Esophagus muscularis mucosa (tissue), 4 donors: ENCODE measurements at regions of chr4 and their contacts with region 1.

Region 1: DNA sequence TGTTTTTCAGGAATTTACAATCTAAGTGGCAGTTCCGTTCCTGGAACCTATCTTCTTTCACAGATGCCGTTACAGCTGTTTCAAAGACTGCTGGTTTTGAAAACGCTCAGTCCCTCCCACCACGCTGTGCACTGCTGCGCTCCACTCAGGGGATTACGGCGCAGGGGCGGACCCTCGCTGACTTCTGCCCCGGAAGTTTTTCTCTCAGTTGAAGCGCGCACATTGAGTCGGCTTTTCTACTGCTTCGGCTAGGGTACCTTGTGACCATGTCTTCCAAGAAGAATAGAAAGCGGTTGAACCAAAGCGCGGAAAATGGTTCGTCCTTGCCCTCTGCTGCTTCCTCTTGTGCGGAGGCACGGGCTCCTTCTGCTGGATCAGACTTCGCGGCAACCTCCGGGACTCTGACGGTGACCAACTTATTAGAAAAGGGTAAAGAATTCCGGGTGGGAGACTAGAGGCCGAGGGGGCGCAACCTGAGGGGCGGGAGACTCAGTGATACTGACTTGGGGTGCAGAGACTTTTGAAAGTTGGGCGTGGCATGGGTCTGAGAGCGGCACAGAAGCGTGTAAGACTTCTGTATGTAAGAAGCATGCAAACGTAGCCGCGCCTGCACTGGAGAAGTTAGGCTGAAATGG is 597 bp upstream of the NUDT6 start:
- DNase-seq: peak; percentile 96
- H3K4me3 ChIP-seq: peak overlapping the region; percentile 80 to 95 (median 88)
- H3K27ac ChIP-seq: peak overlapping the region; percentile 73 to 85 (median 84)
- H3K4me1 ChIP-seq: peaks cover 15 to 42% (median 24%) of the 10 kb centered on the region in 4 donors
- H3K27me3 ChIP-seq: no peaks in the 10 kb centered on the region
- CTCF ChIP-seq: no peak
- EP300 ChIP-seq: no peak
- POLR2A ChIP-seq: no peak

Region 2: GRCh38 chr4:122602277-122603142 is 320.5 kb before region 1 on chr4:
- intact Hi-C with region 1: loop called (anchors 10 kb)
- DNase-seq: no peak
- H3K4me3 ChIP-seq: no peak overlapping the region
- H3K27ac ChIP-seq: no peak overlapping the region
- H3K4me1 ChIP-seq: peaks cover 0 to 4% (median 0%) of the 10 kb centered on the region in 4 donors
- H3K27me3 ChIP-seq: peaks cover 0 to 10% (median 0%) of the 10 kb centered on the region in 4 donors
- CTCF ChIP-seq: peak; percentile 27 to 49 (median 48)
- EP300 ChIP-seq: no peak
- POLR2A ChIP-seq: no peak

Region 3: DNA sequence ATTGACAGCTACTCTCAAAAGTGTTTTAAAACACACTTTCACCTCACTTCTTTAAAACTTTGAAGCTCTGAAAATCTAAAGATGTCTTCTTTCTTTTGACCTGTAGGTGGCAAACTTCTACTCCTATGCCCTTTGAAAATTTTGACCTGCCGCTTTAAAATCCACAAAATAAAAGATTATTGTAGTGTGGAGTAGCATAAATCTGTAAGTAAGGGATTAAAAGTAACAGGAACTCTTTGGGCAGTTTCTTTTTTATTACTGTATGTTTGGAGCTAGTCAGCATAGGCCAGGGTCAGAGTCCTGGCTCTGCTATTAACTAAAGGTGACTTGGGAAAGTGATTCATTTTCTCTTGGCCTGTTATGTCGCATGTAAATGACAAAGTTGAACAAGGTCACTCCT is 165.0 kb before region 1 on chr4:
- intact Hi-C with region 1: loop called (anchors 2 kb)
- DNase-seq: no peak
- H3K4me3 ChIP-seq: no peak overlapping the region
- H3K27ac ChIP-seq: no peak overlapping the region
- H3K4me1 ChIP-seq: peaks cover 4 to 7% (median 4%) of the 10 kb centered on the region in 4 donors
- H3K27me3 ChIP-seq: no peaks in the 10 kb centered on the region
- CTCF ChIP-seq: peak; percentile 63 to 77 (median 73)
- EP300 ChIP-seq: no peak
- POLR2A ChIP-seq: no peak

Region 4: DNA sequence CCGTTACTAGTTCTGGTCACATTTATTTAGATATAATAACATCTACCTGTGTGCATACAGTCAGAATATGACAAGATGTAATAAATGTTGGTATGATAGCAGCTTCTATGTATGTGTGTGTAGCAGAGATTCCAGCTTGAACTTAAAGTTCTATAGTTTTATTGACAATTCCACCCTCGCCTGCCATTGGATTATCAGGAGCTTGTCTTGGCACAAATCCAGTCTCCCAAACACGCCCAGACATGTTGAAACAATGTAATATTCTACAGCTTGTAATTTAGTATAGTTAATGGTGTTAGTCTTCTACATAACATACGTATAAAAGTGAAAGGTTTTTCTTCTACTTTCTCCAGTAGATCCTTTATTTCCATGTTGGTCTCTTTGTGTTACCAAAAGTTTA is 146.1 kb before region 1 on chr4:
- intact Hi-C with region 1: no loop called
- DNase-seq: no peak
- H3K4me3 ChIP-seq: no peak overlapping the region
- H3K27ac ChIP-seq: no peak overlapping the region
- H3K4me1 ChIP-seq: peaks cover 0 to 7% (median 7%) of the 10 kb centered on the region in 4 donors
- H3K27me3 ChIP-seq: no peaks in the 10 kb centered on the region
- CTCF ChIP-seq: no peak
- EP300 ChIP-seq: no peak
- POLR2A ChIP-seq: no peak

Region 5: DNA sequence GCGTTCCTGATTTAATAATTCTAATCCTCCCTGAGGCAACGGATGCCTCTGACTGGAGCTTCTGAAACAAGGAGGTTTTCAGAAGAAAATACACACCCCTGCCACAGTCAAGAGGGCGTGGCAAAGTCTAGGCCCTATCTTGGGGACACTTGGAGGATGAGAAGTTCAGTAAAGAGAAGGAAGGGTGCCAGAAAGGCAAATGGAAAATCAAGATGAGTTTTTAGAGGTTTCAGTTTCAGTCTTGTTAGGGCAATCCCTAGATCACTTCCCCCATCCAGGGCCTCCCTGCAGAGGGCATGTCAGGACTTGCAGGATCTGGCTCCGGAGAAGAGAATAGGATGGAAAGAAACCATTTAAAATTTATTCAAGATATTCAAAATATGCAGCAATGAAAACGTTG is 124.9 kb before region 1 on chr4:
- intact Hi-C with region 1: no loop called
- DNase-seq: no peak
- H3K4me3 ChIP-seq: peak overlapping the region; percentile 23 to 45 (median 28)
- H3K27ac ChIP-seq: peak overlapping the region; percentile 60 to 72 (median 64)
- H3K4me1 ChIP-seq: peaks cover 10 to 19% (median 14%) of the 10 kb centered on the region in 4 donors
- H3K27me3 ChIP-seq: no peaks in the 10 kb centered on the region
- CTCF ChIP-seq: peak in 2 of 3 experiments; percentile 22 to 27
- EP300 ChIP-seq: no peak
- POLR2A ChIP-seq: no peak

Region 6: DNA sequence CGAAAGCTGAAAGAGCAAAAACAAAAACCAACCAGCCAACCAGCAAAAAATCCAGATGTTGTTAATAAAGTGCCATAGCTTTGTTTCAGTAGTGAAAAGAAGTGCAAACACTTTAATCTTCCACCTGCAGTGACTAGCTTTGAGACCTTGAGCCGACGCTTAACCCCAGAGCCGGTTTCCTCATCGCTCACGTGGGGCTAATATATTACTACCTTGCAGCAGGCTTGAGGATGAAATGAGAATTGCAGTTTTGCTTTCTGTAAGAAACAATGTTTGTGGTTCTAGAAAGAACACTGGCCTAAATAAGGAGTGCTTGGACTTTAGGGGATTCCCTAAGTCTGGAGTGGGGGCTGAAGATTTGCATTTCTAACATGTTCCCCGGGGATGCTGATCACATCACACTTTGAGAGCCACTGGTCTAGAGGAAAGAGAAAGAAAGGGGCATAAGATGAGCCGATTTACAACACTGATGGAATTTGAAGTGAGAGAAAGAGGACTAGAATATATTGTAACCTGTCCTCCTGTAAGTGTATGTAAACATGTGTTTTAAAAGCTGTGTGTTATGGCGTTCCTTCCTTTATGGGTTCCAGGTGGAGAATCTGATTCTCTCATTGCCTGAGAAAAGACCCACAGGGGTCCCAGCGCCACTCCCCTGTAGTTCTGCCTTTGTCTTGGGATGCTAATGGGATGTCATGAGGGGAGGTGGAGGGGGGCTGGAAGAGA is 95.0 kb before region 1 on chr4:
- intact Hi-C with region 1: loop called (anchors 5 kb)
- DNase-seq: no peak
- H3K4me3 ChIP-seq: peak overlapping the region; percentile 66 to 89 (median 78)
- H3K27ac ChIP-seq: peak overlapping the region; percentile 90 to 94 (median 92)
- H3K4me1 ChIP-seq: peaks cover 4 to 59% (median 56%) of the 10 kb centered on the region in 4 donors
- H3K27me3 ChIP-seq: no peaks in the 10 kb centered on the region
- CTCF ChIP-seq: peak in 2 of 3 experiments; percentile 15 to 57
- EP300 ChIP-seq: no peak
- POLR2A ChIP-seq: no peak